A549 (cell line): ENCODE measurements at regions of chr5 and their contacts with region 1.

Region 1: GRCh38 chr5:11266331-11266730 is 505.3 kb upstream of the DAP start:
- DNase-seq: no peak
- ATAC-seq: no peak
- H3K4me3 ChIP-seq: no peak overlapping the region
- H3K27ac ChIP-seq: no peak overlapping the region
- H3K4me1 ChIP-seq: no peaks in the 10 kb centered on the region
- CTCF ChIP-seq: no peak
- EP300 ChIP-seq: no peak
- POLR2A ChIP-seq: no peak
- RAD21 ChIP-seq: no peak

Region 2: GRCh38 chr5:12023614-12024241 is 757.4 kb after region 1 on chr5:
- CTCF ChIA-PET with region 1: interaction called, 11 read pairs
- POLR2A ChIA-PET with region 1: no interaction called
- DNase-seq: peak in 1 of 2 experiments; percentile 49
- ATAC-seq: 0 out of 6 replicates have a peak, but pooled peaks of 1 of the 2 experiments have one; percentile 44
- H3K4me3 ChIP-seq: no peak overlapping the region
- H3K27ac ChIP-seq: no peak overlapping the region
- H3K4me1 ChIP-seq: no peaks in the 10 kb centered on the region
- CTCF ChIP-seq: peak; percentile 54
- EP300 ChIP-seq: no peak
- POLR2A ChIP-seq: no peak
- RAD21 ChIP-seq: peak; percentile 58 to 64